Heart right ventricle (tissue), 16 donors: ENCODE measurements at regions of chr10 and their contacts with region 1.

Region 1: GRCh38 chr10:114714281-114714741 is 56.2 kb upstream of the ABLIM1 start:
- DNase-seq: peak in 1 of 2 donors; percentile 60
- ATAC-seq: peak; percentile 50 to 87 (median 80)
- H3K4me3 ChIP-seq: peak overlapping the region in 3 of 10 donors; percentile 2 to 8 (median 4)
- H3K27ac ChIP-seq: peak overlapping the region; percentile 60 to 93 (median 75)
- H3K4me1 ChIP-seq: peaks cover 12 to 94% (median 81%) of the 10 kb centered on the region in 9 donors
- H3K27me3 ChIP-seq: no peaks in the 10 kb centered on the region
- CTCF ChIP-seq: no peak

Region 2: DNA sequence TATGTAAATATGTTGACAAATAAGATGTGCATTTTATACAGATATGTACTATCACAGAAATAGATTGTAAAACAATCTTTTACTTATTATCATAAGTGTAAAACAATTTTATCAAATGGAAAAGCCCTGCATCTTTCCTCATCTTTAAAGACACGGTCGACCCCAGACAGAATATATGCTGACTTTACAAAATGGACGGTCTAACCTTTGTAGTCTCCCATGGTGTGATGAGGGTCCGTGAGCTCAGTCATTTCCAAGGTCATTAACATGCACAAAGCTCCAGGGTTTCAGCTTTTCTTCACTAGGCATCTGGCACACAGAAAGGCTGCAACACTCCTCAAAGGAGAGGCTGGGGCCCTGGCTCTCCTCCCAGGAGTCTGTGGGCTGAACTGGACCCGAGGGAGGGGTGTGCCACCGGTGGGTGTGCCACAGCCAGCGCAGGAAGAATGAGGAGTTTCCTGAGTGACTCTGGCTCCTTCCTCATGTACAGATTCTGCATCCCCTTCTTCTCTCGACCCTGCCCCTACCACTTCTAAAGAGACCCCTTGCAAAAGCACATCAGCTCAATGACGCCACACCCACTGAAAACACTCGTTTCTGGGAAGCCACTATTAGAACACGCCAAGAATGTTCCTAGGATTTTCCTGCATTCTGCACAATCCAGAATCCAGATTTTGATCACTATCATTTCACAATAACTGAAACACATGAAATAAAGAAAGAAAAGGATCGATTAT is 30.1 kb before region 1 on chr10:
- intact Hi-C with region 1: loop called in 1 of 10 experiments (anchors 5 kb)
- DNase-seq: peak; percentile 49 to 63
- ATAC-seq: peak; percentile 54 to 79 (median 66)
- H3K4me3 ChIP-seq: peak overlapping the region; percentile 15 to 62 (median 54)
- H3K27ac ChIP-seq: peak overlapping the region; percentile 75 to 95 (median 87)
- H3K4me1 ChIP-seq: peaks cover 19 to 92% (median 60%) of the 10 kb centered on the region in 9 donors
- H3K27me3 ChIP-seq: no peaks in the 10 kb centered on the region
- CTCF ChIP-seq: no peak

Region 3: GRCh38 chr10:114694752-114695151 is 19.6 kb before region 1 on chr10:
- intact Hi-C with region 1: loop called in 1 of 10 experiments (anchors 2 kb)
- DNase-seq: no peak
- ATAC-seq: no peak
- H3K4me3 ChIP-seq: no peak overlapping the region
- H3K27ac ChIP-seq: peak overlapping the region in 5 of 10 donors; percentile 29 to 84 (median 77)
- H3K4me1 ChIP-seq: peaks cover 0 to 85% (median 49%) of the 10 kb centered on the region in 9 donors
- H3K27me3 ChIP-seq: no peaks in the 10 kb centered on the region
- CTCF ChIP-seq: peak in 7 of 9 donors; percentile 32 to 58 (median 48)

Region 4: GRCh38 chr10:114749014-114749413 is 34.7 kb after region 1 on chr10:
- intact Hi-C with region 1: loop called in 2 of 10 experiments (anchors 2 to 5 kb)
- DNase-seq: peak in 1 of 2 donors; percentile 24
- ATAC-seq: peak; percentile 65 to 92 (median 82)
- H3K4me3 ChIP-seq: no peak overlapping the region
- H3K27ac ChIP-seq: peak overlapping the region; percentile 69 to 87 (median 76)
- H3K4me1 ChIP-seq: peaks cover 4 to 75% (median 33%) of the 10 kb centered on the region in 9 donors
- H3K27me3 ChIP-seq: no peaks in the 10 kb centered on the region
- CTCF ChIP-seq: no peak

Region 5: DNA sequence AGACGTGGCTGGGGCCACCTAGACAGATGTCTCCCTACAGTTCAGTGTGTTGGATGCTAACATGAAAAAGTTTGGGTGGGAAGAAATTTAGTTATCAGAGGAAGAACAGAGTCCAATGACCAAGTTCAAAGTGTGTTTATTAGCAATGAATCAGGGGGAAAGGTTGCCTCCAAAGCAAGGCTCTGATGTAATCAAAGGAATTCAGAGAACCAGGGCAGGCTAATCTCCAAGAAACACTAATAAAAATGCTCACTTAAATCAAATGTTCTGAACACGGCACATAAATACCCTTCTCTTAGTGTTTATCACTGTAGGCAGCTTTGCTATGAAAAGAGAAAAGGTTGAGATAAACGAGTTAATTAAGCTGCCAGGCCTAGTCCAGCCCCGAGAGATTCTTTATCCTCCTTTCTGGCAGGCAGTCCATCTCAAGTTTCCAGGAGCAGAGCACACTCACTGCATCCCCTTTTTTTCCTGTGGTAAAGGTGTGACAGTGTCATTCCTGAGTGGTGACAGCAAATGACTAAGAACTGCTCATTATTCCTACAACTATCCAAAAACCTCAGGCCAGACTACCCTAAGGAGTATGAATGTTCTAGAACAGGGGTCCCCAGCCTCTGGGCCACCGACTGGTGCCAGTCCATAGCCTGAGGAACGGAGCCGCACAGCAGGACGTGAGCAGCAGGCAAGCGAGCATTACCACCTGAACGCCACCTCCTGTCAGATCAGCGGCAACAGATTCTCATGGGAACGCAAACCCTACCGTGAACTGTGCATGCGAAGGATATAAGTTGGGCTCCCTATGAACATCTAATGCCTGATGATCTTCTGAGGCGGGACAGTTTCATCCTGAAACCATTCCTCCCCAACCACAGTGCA is 40.4 kb after region 1 on chr10:
- intact Hi-C with region 1: loop called in 3 of 10 experiments (anchors 2 to 5 kb)
- DNase-seq: no peak
- ATAC-seq: peak in 6 of 8 donors; percentile 18 to 52 (median 26)
- H3K4me3 ChIP-seq: no peak overlapping the region
- H3K27ac ChIP-seq: peak overlapping the region in 9 of 10 donors; percentile 9 to 82 (median 51)
- H3K4me1 ChIP-seq: peaks cover 7 to 89% (median 57%) of the 10 kb centered on the region in 9 donors
- H3K27me3 ChIP-seq: no peaks in the 10 kb centered on the region
- CTCF ChIP-seq: no peak

Region 6: DNA sequence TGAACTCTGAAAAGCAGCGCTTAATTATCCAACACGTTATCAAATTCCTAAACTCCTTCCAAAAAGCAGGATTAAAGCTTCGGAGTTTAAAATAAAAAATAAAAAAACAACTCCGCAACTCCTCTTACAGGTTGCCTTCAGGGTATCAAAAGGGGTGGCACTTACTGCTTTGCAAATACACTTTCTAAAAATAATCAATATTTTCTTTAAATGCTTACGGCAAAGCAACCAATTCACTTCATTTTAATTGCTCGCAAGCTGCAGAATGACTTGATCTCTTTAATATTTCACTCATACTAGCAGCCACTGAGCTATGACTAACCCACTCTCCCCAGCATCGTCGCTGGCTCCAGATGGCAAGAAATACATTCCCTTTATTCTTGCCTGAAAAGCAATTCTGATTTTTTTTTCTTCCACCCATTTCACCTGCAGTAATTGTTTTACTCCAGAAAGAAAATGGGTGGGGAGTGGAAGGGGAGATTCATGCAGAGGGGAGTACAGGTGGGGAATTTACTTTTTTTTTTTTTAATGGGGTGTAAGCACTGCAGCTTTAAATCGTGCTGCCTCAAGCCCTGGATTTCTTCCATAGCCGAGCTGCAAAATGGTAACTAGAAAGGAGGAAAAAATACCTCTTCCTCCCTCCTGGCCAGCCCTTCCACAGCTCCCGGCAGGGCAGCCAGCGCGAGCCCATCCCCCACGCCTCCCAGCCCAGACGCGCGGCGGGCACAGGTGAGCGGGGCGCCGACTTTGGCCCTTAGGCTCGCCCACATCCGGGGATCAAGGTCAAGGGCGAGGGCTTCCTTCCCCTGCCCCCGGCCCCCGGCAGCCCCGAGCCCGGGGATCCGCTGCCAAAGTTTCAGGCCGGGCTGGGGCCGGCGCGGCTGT is 53.0 kb after region 1 on chr10:
- intact Hi-C with region 1: loop called in 6 of 10 experiments (anchors 5 to 10 kb)
- DNase-seq: peak in 1 of 2 donors; percentile 48
- ATAC-seq: peak; percentile 64 to 86 (median 78)
- H3K4me3 ChIP-seq: peak overlapping the region; percentile 69 to 92 (median 86)
- H3K27ac ChIP-seq: peak overlapping the region; percentile 85 to 96 (median 93)
- H3K4me1 ChIP-seq: peaks cover 0 to 47% (median 21%) of the 10 kb centered on the region in 9 donors
- H3K27me3 ChIP-seq: peaks cover 0 to 36% (median 0%) of the 10 kb centered on the region in 7 donors
- CTCF ChIP-seq: no peak

Region 7: DNA sequence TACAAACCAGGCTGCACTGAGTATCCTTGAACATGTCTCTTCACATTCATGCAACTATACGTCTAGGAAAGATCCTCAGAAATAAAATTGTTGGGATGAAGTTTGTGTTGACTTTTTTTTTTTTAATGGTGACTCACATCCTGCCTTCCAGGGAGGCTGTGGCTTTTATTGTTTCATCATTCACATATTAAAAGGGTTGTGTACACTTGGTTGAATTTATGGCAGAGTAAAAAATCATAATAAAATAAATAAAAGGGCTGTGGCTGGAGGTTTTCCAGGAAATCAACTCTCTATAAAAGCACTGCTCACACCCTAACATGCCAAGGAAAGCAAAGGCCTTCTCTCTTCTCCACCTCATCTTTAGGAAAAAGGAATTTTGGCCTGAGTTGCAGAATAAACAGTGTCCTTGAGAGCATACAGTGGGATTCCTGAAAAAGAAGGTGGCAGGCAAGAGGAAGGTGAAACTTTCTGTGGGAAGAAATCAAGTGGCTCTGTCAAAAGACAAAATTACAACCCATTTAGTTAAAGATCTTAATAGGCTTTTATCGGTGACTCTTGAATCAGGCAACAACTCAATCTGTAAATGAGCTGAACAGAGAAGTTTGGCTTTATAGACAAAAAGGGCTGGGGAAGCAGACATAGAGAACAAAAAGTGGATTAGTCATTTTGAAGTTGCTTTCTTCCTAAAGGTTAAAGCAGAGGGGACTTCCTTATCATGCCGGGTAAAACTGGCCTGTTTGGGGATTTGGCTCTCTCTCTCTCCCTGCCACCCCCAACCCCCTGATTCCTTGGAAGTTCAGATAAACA is 65.7 kb after region 1 on chr10:
- intact Hi-C with region 1: loop called in 3 of 10 experiments (anchors 5 to 10 kb)
- DNase-seq: no peak
- ATAC-seq: peak in 5 of 8 donors; percentile 38 to 76 (median 51)
- H3K4me3 ChIP-seq: no peak overlapping the region
- H3K27ac ChIP-seq: peak overlapping the region in 7 of 10 donors; percentile 16 to 51 (median 37)
- H3K4me1 ChIP-seq: peaks cover 0 to 37% (median 13%) of the 10 kb centered on the region in 9 donors
- H3K27me3 ChIP-seq: no peaks in the 10 kb centered on the region
- CTCF ChIP-seq: no peak